ENCODE measurements at regions of chr4 and their contacts with region 1.

Region 1: DNA sequence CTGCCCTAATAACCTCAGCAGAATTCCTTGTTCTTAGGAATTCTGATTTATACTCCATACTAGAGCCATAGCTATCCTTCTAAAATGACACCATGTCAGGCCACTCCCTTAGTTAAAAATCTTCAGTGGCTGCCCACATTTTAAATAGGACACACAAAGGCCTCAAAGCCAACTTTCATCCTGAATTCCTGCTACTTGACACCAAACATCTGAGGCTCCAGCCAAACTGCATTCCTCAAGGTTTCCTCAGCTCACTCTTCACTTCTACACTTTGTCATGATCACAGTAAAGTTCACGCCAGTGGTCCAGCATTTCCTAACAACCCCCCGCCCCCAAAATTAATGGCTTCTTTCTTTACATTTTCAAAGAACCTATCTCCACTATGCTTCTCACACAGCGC is 124.3 kb downstream of the ADGRA3 start:
- DNase-seq: no peak
- ATAC-seq: no peak
- H3K4me3 ChIP-seq: no peak overlapping the region
- H3K27ac ChIP-seq: no peak overlapping the region
- H3K4me1 ChIP-seq: no peaks in the 10 kb centered on the region
- H3K27me3 ChIP-seq: no peaks in the 10 kb centered on the region
- CTCF ChIP-seq: no peak
- POLR2A ChIP-seq: no peak

Region 2: DNA sequence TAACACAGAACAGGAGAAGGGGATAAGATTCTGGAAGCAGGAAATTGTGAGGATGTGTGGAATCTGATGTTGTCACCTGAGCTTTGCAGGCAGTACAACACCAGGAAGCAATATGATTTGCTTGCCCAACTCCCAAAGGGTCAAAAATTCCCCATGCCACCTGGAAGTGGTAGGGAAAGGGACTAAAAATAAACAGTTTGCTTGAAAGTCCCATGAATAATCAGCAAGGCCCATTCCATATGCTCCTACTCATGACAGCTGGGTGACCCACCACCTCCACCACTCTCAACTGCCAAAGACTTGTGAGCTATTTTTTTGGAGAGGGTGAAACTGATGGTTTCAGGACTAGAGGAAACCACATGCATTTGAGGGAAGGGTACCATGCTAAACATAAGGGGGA is 611.4 kb before region 1 on chr4:
- intact Hi-C with region 1: loop called (anchors 10 kb)
- DNase-seq: no peak
- ATAC-seq: peak; percentile 27
- H3K4me3 ChIP-seq: no peak overlapping the region
- H3K27ac ChIP-seq: peak overlapping the region in 1 of 4 donors; percentile 8
- H3K4me1 ChIP-seq: no peaks in the 10 kb centered on the region
- H3K27me3 ChIP-seq: no peaks in the 10 kb centered on the region
- CTCF ChIP-seq: no peak
- POLR2A ChIP-seq: no peak

Measured in body of pancreas (tissue), 4 donors.